H1 (cell line): ENCODE measurements at regions of chr16 and their contacts with region 1.

Region 1: GRCh38 chr16:3698941-3699340 is 18.4 kb downstream of the TRAP1 start:
- DNase-seq: no peak
- H3K4me3 ChIP-seq: no peak overlapping the region
- H3K27ac ChIP-seq: no peak overlapping the region
- H3K4me1 ChIP-seq: no peaks in the 10 kb centered on the region; a peak in 2 of 7 replicates
- H3K27me3 ChIP-seq: no peaks in the 10 kb centered on the region
- CTCF ChIP-seq: no peak
- EP300 ChIP-seq: no peak
- POLR2A ChIP-seq: no peak
- RAD21 ChIP-seq: no peak

Region 2: GRCh38 chr16:3520413-3520812 is 178.5 kb before region 1 on chr16:
- CTCF ChIA-PET with region 1: no interaction called
- POLR2A ChIA-PET with region 1: no interaction called
- DNase-seq: no peak
- H3K4me3 ChIP-seq: no peak overlapping the region
- H3K27ac ChIP-seq: no peak overlapping the region
- H3K4me1 ChIP-seq: no peaks in the 10 kb centered on the region
- H3K27me3 ChIP-seq: no peaks in the 10 kb centered on the region
- CTCF ChIP-seq: no peak
- EP300 ChIP-seq: no peak
- POLR2A ChIP-seq: no peak
- RAD21 ChIP-seq: no peak

Region 3: DNA sequence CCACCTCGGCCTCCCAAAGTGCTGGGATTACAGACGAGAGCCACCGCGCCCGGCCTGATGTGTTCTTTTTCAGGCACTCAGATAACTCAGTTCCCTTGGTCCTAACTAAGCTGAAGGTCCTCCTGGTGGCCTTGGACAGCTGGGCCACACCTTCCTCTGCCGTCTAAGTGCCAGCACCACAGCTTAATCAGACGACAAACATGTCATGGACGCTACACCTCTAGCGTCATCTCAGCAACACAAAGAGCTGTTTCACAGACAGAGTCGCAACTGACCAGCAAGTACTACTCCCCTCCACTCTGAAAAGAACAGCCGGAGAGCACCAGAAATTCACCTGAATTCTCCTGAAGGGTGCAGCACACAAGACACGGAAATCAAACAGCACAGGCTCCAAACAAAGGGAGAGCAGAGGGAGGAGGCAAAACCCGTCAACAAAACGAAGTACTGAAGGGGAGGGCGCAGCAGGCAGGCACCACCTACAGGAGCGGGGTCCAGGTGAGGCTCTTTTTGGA is 14.0 kb after region 1 on chr16:
- CTCF ChIA-PET with region 1: interaction called, 3 read pairs
- POLR2A ChIA-PET with region 1: interaction called, 15 read pairs
- DNase-seq: no peak
- H3K4me3 ChIP-seq: no peak overlapping the region
- H3K27ac ChIP-seq: peak overlapping the region; percentile 16; the same call in 1 of the 2 replicates
- H3K4me1 ChIP-seq: peaks cover 0 to 6% (median 1%) of the 10 kb centered on the region in 4 experiments; a peak in 4 of 7 replicates
- H3K27me3 ChIP-seq: no peaks in the 10 kb centered on the region
- CTCF ChIP-seq: no peak
- EP300 ChIP-seq: no peak
- POLR2A ChIP-seq: no peak
- RAD21 ChIP-seq: no peak